ENCODE measurements at regions of chr9 and their contacts with region 1.

Region 1: GRCh38 chr9:33082538-33083326 is 6.3 kb upstream of the SMU1 start:
- DNase-seq: peak; percentile 54
- H3K4me3 ChIP-seq: no peak overlapping the region
- H3K27ac ChIP-seq: peak overlapping the region in 4 of 8 donors; percentile 8 to 60 (median 52)
- H3K4me1 ChIP-seq: peaks cover 13 to 36% (median 28%) of the 10 kb centered on the region in 6 donors
- H3K27me3 ChIP-seq: no peaks in the 10 kb centered on the region
- CTCF ChIP-seq: no peak
- POLR2A ChIP-seq: no peak

Region 2: GRCh38 chr9:33225319-33226149 is 142.8 kb after region 1 on chr9:
- intact Hi-C with region 1: loop called (anchors 2 kb)
- DNase-seq: no peak
- H3K4me3 ChIP-seq: no peak overlapping the region
- H3K27ac ChIP-seq: peak overlapping the region in 6 of 8 donors; percentile 2 to 87 (median 80)
- H3K4me1 ChIP-seq: peaks cover 16 to 49% (median 39%) of the 10 kb centered on the region in 6 donors
- H3K27me3 ChIP-seq: no peaks in the 10 kb centered on the region
- CTCF ChIP-seq: peak; percentile 49 to 89 (median 81)
- POLR2A ChIP-seq: no peak